Activated CD8-positive, alpha-beta T cell treated with anti-CD3 and anti-CD28 coated beads for 36 hours (primary cell): ENCODE measurements at regions of chr2 and their contacts with region 1.

Region 1: GRCh38 chr2:157443795-157444640 is at the start of gene CYTIP:
- DNase-seq: peak; percentile 82
- ATAC-seq: peak; percentile 43
- H3K4me3 Mint-ChIP-seq: peak within 1 kb of the TSS; percentile 90
- H3K27ac Mint-ChIP-seq: peak within 1 kb of the TSS; percentile 94
- H3K4me1 Mint-ChIP-seq: peaks cover 35% of the 10 kb centered on the region
- H3K27me3 Mint-ChIP-seq: no peaks in the 10 kb centered on the region
- CTCF ChIP-seq: no peak
- total RNA-seq, gene CYTIP: 514 to 520 TPM

Region 2: DNA sequence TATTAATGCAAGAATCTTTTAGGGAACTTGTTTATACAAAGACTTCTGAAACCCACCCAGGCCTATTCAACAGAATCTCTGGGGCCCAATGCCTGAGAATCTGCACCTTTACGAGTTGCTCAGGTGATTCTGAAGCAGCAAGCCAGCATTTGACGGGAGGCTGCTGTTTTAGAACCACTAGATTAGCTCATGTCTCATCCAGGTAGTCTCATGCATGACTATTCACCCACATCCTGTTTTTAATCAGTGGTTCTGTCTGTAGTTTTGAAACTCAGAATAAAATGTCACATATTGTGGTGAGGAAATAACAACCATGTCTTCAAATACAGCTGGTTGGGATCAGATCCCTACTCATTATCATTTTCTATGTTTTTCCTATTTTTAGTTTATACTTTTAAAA is 39.7 kb before region 1 on chr2:
- CTCF ChIA-PET with region 1: no interaction called
- POLR2A ChIA-PET with region 1: interaction called, 18 read pairs
- intact Hi-C with region 1: no loop called
- DNase-seq: peak; percentile 78
- ATAC-seq: peak; percentile 89
- H3K4me3 Mint-ChIP-seq: peak overlapping the region; percentile 36
- H3K27ac Mint-ChIP-seq: peak overlapping the region; percentile 93
- H3K4me1 Mint-ChIP-seq: peaks cover 77% of the 10 kb centered on the region
- H3K27me3 Mint-ChIP-seq: no peaks in the 10 kb centered on the region
- CTCF ChIP-seq: no peak

Region 3: GRCh38 chr2:157420771-157421323 is 23.2 kb before region 1 on chr2:
- CTCF ChIA-PET with region 1: interaction called, 14 read pairs
- POLR2A ChIA-PET with region 1: interaction called, 1,592 read pairs
- intact Hi-C with region 1: no loop called
- DNase-seq: peak; percentile 59
- ATAC-seq: peak; percentile 49
- H3K4me3 Mint-ChIP-seq: peak overlapping the region; percentile 46
- H3K27ac Mint-ChIP-seq: peak overlapping the region; percentile 95
- H3K4me1 Mint-ChIP-seq: peaks cover 80% of the 10 kb centered on the region
- H3K27me3 Mint-ChIP-seq: no peaks in the 10 kb centered on the region
- CTCF ChIP-seq: no peak

Region 4: GRCh38 chr2:157460384-157460837 is 16.4 kb after region 1 on chr2:
- CTCF ChIA-PET with region 1: interaction called, 10 read pairs
- POLR2A ChIA-PET with region 1: interaction called, 1,592 read pairs
- intact Hi-C with region 1: loop called (anchors 2 kb)
- DNase-seq: no peak
- ATAC-seq: no peak
- H3K4me3 Mint-ChIP-seq: no peak overlapping the region
- H3K27ac Mint-ChIP-seq: peak overlapping the region; percentile 35
- H3K4me1 Mint-ChIP-seq: peaks cover 86% of the 10 kb centered on the region
- H3K27me3 Mint-ChIP-seq: no peaks in the 10 kb centered on the region
- CTCF ChIP-seq: no peak

Region 5: GRCh38 chr2:157480182-157480961 is 36.4 kb after region 1 on chr2:
- CTCF ChIA-PET with region 1: interaction called, 12 read pairs
- POLR2A ChIA-PET with region 1: interaction called, 1,592 read pairs
- intact Hi-C with region 1: loop called (anchors 2 kb)
- DNase-seq: peak; percentile 79
- ATAC-seq: peak; percentile 66
- H3K4me3 Mint-ChIP-seq: peak overlapping the region; percentile 80
- H3K27ac Mint-ChIP-seq: peak overlapping the region; percentile 98
- H3K4me1 Mint-ChIP-seq: peaks cover 82% of the 10 kb centered on the region
- H3K27me3 Mint-ChIP-seq: no peaks in the 10 kb centered on the region
- CTCF ChIP-seq: no peak